ENCODE measurements at regions of chr4 and their contacts with region 1.

Region 1: GRCh38 chr4:115851918-115852766 is 738.7 kb upstream of the NDST4 start:
- DNase-seq: peak; percentile 19
- ATAC-seq: peak; percentile 88
- H3K4me3 ChIP-seq: no peak overlapping the region
- H3K27ac ChIP-seq: no peak overlapping the region
- H3K4me1 ChIP-seq: peaks cover 9% of the 10 kb centered on the region
- H3K27me3 ChIP-seq: no peaks in the 10 kb centered on the region
- CTCF ChIP-seq: peak; percentile 72 to 74 (median 72)
- EP300 ChIP-seq: no peak
- POLR2A ChIP-seq: no peak
- RAD21 ChIP-seq: peak; percentile 76

Region 2: DNA sequence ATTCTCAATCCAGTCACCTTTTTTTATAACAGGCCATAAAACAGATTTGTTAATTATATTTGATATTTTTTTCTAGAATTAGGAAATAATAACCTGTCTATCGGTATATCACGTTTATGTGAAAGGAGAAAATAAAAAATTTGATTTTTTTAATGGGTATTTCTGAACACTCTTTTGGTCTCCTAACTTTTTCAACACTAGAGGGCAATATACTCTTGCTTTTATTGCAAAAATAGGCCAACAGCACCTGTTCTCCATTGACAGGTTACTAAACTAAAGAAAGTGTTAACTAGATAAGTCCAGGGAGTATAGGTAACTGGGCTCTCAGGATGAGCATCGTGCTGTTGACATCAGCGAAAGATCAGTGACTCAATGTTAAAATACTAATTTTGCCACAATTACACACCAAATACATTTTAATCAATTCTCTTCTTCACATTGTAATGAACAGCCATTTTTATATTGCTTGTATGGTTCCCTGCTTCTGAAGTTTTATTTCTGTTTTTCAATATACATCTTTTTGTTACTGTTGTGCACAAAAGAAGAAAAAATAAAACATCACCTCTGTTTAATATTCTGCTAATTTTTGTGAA is 761.6 kb before region 1 on chr4:
- CTCF ChIA-PET with region 1: interaction called, 17 read pairs
- POLR2A ChIA-PET with region 1: no interaction called
- RAD21 ChIA-PET with region 1: interaction called, 3 read pairs
- SMC1A ChIA-PET with region 1: interaction called, 14 read pairs
- in situ Hi-C with region 1: loop called (anchors 10 kb)
- intact Hi-C with region 1: loop called (anchors 2 kb)
- DNase-seq: no peak
- ATAC-seq: peak; percentile 80
- H3K4me3 ChIP-seq: no peak overlapping the region
- H3K27ac ChIP-seq: no peak overlapping the region
- H3K4me1 ChIP-seq: no peaks in the 10 kb centered on the region
- H3K27me3 ChIP-seq: no peaks in the 10 kb centered on the region
- CTCF ChIP-seq: peak; percentile 39 to 60 (median 52); a peak in 5 of 6 replicates
- EP300 ChIP-seq: no peak
- POLR2A ChIP-seq: no peak
- RAD21 ChIP-seq: peak; percentile 64

Region 3: DNA sequence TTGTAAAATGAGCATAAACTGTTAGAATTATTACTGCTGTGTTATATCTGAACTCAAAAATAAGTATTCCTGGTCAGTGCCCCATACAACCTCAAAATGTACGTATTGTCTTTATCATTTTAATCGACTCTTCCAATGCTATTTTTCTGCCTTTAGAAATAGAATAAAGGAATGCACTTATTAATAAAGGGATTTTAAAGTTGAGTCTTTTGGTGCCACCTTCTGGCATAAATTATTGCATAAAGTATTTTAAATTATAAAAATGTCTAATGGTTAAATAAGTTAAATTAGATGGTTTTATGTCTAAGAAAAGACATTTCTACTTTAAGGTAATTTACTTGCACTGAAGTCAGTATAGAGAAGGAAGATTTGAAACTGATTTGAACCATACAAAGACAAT is 314.8 kb before region 1 on chr4:
- CTCF ChIA-PET with region 1: interaction called, 9 read pairs
- POLR2A ChIA-PET with region 1: no interaction called
- RAD21 ChIA-PET with region 1: interaction called, 9 read pairs
- SMC1A ChIA-PET with region 1: interaction called, 28 read pairs
- in situ Hi-C with region 1: no loop called
- intact Hi-C with region 1: loop called (anchors 5 kb)
- DNase-seq: no peak
- ATAC-seq: no peak
- H3K4me3 ChIP-seq: no peak overlapping the region
- H3K27ac ChIP-seq: no peak overlapping the region
- H3K4me1 ChIP-seq: no peaks in the 10 kb centered on the region
- H3K27me3 ChIP-seq: no peaks in the 10 kb centered on the region
- CTCF ChIP-seq: no peak; a peak in 1 of 6 replicates
- EP300 ChIP-seq: no peak
- POLR2A ChIP-seq: no peak
- RAD21 ChIP-seq: peak; percentile 48

Region 4: GRCh38 chr4:115668396-115668795 is 183.7 kb before region 1 on chr4:
- CTCF ChIA-PET with region 1: interaction called, 3 read pairs
- POLR2A ChIA-PET with region 1: no interaction called
- RAD21 ChIA-PET with region 1: interaction called, 3 read pairs
- SMC1A ChIA-PET with region 1: no interaction called
- in situ Hi-C with region 1: no loop called
- intact Hi-C with region 1: loop called (anchors 5 kb)
- DNase-seq: no peak
- ATAC-seq: no peak
- H3K4me3 ChIP-seq: no peak overlapping the region
- H3K27ac ChIP-seq: no peak overlapping the region
- H3K4me1 ChIP-seq: no peaks in the 10 kb centered on the region
- H3K27me3 ChIP-seq: no peaks in the 10 kb centered on the region
- CTCF ChIP-seq: no peak
- EP300 ChIP-seq: no peak
- POLR2A ChIP-seq: no peak
- RAD21 ChIP-seq: no peak

Region 5: GRCh38 chr4:115790812-115791211 is 61.3 kb before region 1 on chr4:
- CTCF ChIA-PET with region 1: interaction called, 11 read pairs
- POLR2A ChIA-PET with region 1: no interaction called
- RAD21 ChIA-PET with region 1: interaction called, 8 read pairs
- SMC1A ChIA-PET with region 1: interaction called, 4 read pairs
- in situ Hi-C with region 1: no loop called
- intact Hi-C with region 1: no loop called
- DNase-seq: no peak
- ATAC-seq: no peak
- H3K4me3 ChIP-seq: no peak overlapping the region
- H3K27ac ChIP-seq: no peak overlapping the region
- H3K4me1 ChIP-seq: no peaks in the 10 kb centered on the region
- H3K27me3 ChIP-seq: no peaks in the 10 kb centered on the region
- CTCF ChIP-seq: no peak; a peak in 1 of 6 replicates
- EP300 ChIP-seq: no peak
- POLR2A ChIP-seq: no peak
- RAD21 ChIP-seq: 0 out of 2 replicates have a peak, but pooled peaks have one; percentile 6

Region 6: GRCh38 chr4:115803825-115804224 is 48.3 kb before region 1 on chr4:
- CTCF ChIA-PET with region 1: interaction called, 11 read pairs
- POLR2A ChIA-PET with region 1: no interaction called
- RAD21 ChIA-PET with region 1: no interaction called
- SMC1A ChIA-PET with region 1: no interaction called
- in situ Hi-C with region 1: no loop called
- intact Hi-C with region 1: no loop called
- DNase-seq: no peak
- ATAC-seq: no peak
- H3K4me3 ChIP-seq: no peak overlapping the region
- H3K27ac ChIP-seq: no peak overlapping the region
- H3K4me1 ChIP-seq: no peaks in the 10 kb centered on the region
- H3K27me3 ChIP-seq: no peaks in the 10 kb centered on the region
- CTCF ChIP-seq: no peak
- EP300 ChIP-seq: no peak
- POLR2A ChIP-seq: no peak
- RAD21 ChIP-seq: no peak

Region 7: GRCh38 chr4:115950806-115951205 is 98.7 kb after region 1 on chr4:
- CTCF ChIA-PET with region 1: no interaction called
- POLR2A ChIA-PET with region 1: interaction called, 3 read pairs
- RAD21 ChIA-PET with region 1: interaction called, 6 read pairs
- SMC1A ChIA-PET with region 1: no interaction called
- in situ Hi-C with region 1: no loop called
- intact Hi-C with region 1: loop called (anchors 2 kb)
- DNase-seq: no peak
- ATAC-seq: peak; percentile 46
- H3K4me3 ChIP-seq: no peak overlapping the region
- H3K27ac ChIP-seq: peak overlapping the region; percentile 80
- H3K4me1 ChIP-seq: peaks cover 6% of the 10 kb centered on the region
- H3K27me3 ChIP-seq: no peaks in the 10 kb centered on the region
- CTCF ChIP-seq: no peak
- EP300 ChIP-seq: no peak
- POLR2A ChIP-seq: no peak
- RAD21 ChIP-seq: no peak